ENCODE measurements at regions of chr1 and their contacts with region 1.

Region 1: DNA sequence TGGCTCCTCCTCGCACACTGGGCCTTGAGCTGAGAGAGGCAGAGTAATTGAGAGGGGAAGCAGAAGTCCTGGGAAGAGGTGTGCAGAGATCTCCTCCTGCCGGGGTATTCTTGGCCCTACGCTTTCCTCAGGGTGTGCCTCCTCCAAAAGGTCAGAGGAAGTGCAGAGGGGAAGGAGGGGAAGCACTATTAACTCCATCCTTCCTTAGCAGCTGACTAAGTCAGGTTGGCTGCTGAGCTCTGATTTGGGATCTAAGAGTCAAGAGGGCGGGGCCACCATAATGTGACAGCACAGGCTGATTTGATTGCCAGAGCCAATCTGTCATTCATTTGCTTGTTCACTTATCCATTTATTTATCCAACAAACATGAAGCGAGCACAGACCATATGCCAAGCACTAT is 12.3 kb downstream of the ATP2B4 start:
- DNase-seq: peak in 3 of 5 donors; percentile 36 to 51 (median 48)
- ATAC-seq: peak; percentile 54 to 88 (median 72)
- H3K4me3 ChIP-seq: no peak overlapping the region
- H3K27ac ChIP-seq: peak overlapping the region in 11 of 12 donors; percentile 38 to 90 (median 62)
- H3K4me1 ChIP-seq: peaks cover 24 to 91% (median 78%) of the 10 kb centered on the region in 12 donors
- H3K27me3 ChIP-seq: no peaks in the 10 kb centered on the region
- CTCF ChIP-seq: peak in 9 of 12 donors; percentile 11 to 44 (median 25)
- POLR2A ChIP-seq: no peak

Region 2: GRCh38 chr1:203673550-203674427 is 34.8 kb after region 1 on chr1:
- intact Hi-C with region 1: loop called in 3 of 10 experiments (anchors 2 to 5 kb)
- DNase-seq: peak; percentile 50 to 80 (median 67)
- ATAC-seq: peak; percentile 45 to 87 (median 83)
- H3K4me3 ChIP-seq: peak overlapping the region in 2 of 12 donors; percentile 10 to 13
- H3K27ac ChIP-seq: peak overlapping the region; percentile 58 to 91 (median 84)
- H3K4me1 ChIP-seq: peaks cover 20 to 99% (median 84%) of the 10 kb centered on the region in 12 donors
- H3K27me3 ChIP-seq: no peaks in the 10 kb centered on the region
- CTCF ChIP-seq: peak in 5 of 12 donors; percentile 21 to 38 (median 34)
- POLR2A ChIP-seq: no peak

Region 3: DNA sequence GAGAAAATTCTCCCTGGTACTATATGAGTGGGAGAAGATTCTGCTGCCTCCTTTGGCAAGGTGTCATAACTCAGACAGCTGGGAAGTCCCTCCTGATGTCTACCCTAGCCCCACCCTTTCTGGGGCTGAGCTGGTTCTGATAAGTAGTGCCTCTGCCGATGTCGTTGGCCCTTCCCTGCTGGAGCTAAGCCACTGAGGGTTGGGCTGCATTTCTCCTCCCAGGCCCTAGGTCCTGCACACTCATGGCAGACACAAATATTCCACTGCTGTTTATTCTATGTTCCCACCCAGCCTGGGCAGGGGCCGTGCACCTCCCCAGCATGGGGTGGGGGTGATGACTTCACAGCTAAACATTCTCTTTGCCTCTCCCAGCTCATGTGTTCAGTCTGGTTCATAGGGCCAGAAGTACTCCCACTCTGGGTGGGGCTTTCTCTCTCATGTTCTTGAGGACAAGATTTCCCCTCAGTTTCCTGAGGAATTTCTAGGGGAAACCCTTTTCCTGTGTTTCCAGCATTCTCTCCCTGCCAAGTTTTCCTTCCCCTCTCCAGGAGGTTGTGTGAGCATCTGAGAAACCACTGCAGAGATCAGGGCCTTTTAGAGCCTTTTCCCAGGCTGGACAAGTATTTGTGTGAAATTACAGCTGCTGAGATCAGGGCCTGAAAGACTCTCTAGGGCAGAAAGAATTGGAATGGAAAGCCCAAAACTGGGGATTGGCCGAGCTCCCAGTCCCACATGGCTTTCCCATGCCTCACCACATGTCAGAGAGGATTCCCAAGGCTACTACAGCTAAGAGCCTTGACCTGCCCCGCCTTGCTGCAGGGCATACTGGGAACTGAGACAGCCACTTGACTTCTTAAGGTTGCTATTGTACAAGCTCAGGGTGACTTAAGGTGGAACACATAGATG is 53.9 kb after region 1 on chr1:
- intact Hi-C with region 1: loop called in 1 of 10 experiments (anchors 5 kb)
- DNase-seq: peak; percentile 84 to 92 (median 87)
- ATAC-seq: peak; percentile 82 to 92 (median 88)
- H3K4me3 ChIP-seq: peak overlapping the region in 2 of 12 donors; percentile 1 to 3
- H3K27ac ChIP-seq: peak overlapping the region; percentile 42 to 89 (median 76)
- H3K4me1 ChIP-seq: peaks cover 10 to 89% (median 66%) of the 10 kb centered on the region in 12 donors
- H3K27me3 ChIP-seq: no peaks in the 10 kb centered on the region
- CTCF ChIP-seq: peak in 3 of 12 donors; percentile 8 to 17 (median 10)
- POLR2A ChIP-seq: peak in 1 of 2 donors; percentile 22